Transverse colon (tissue), 4 donors: ENCODE measurements at regions of chr7 and their contacts with region 1.

Region 1: GRCh38 chr7:18295781-18296423 is 199.6 kb upstream of the HDAC9 start:
- DNase-seq: no peak
- H3K4me3 ChIP-seq: no peak overlapping the region
- H3K27ac ChIP-seq: no peak overlapping the region
- H3K4me1 ChIP-seq: peaks cover 0 to 7% (median 0%) of the 10 kb centered on the region in 4 donors
- H3K27me3 ChIP-seq: no peaks in the 10 kb centered on the region
- CTCF ChIP-seq: no peak
- EP300 ChIP-seq: no peak
- POLR2A ChIP-seq: no peak

Region 2: DNA sequence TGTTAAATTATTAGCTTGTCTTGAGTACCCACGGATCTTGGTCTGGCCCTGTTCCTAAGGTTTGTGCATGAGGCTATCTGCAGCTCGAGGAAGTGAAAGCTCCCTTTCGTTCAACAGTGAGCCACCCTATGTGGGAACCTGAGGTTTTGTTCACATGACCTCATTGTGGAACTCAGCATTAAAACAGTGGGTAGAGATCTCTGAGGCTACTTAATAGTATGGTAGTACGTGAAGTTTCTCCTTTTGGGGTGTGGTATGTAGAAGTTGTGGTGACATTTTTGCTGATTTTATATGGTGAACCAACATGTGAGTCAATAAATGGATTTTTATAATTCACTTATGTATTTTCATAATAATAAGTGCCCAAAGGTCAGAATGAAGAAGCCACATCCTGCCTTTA is 1102.0 kb after region 1 on chr7:
- in situ Hi-C with region 1: no loop called
- intact Hi-C with region 1: loop called (anchors 5 kb)
- DNase-seq: no peak
- H3K4me3 ChIP-seq: no peak overlapping the region
- H3K27ac ChIP-seq: no peak overlapping the region
- H3K4me1 ChIP-seq: no peaks in the 10 kb centered on the region
- H3K27me3 ChIP-seq: no peaks in the 10 kb centered on the region
- CTCF ChIP-seq: no peak
- EP300 ChIP-seq: no peak
- POLR2A ChIP-seq: no peak